ENCODE measurements at regions of chr6 and their contacts with region 1.

Region 1: DNA sequence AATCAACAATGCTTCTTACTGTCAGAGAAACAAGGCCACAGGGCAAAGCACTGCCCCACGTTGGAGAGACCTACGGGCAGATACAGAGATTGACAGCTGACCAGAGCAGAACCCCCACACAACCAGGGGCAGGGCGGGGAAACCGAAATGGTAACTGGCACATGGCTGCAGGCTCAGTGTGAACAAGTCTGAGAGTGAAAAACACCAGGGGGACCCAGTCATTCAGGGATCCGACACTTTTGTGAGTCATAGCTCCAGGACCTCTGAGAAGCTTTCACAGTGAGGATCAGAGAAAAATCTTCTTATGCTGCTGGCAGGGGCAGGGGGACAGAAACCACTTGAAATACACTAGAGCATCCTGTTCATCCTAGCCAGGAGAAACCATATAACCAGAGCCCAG is 254.2 kb downstream of the C6orf118 start:
- DNase-seq: no peak
- ATAC-seq: no peak
- H3K4me3 ChIP-seq: no peak overlapping the region
- H3K27ac ChIP-seq: no peak overlapping the region
- H3K4me1 ChIP-seq: no peaks in the 10 kb centered on the region
- H3K27me3 ChIP-seq: no peaks in the 10 kb centered on the region
- CTCF ChIP-seq: no peak
- EP300 ChIP-seq: no peak
- POLR2A ChIP-seq: no peak
- RAD21 ChIP-seq: no peak

Region 2: GRCh38 chr6:165034271-165034741 is 20.9 kb before region 1 on chr6:
- CTCF ChIA-PET with region 1: no interaction called
- POLR2A ChIA-PET with region 1: no interaction called
- in situ Hi-C with region 1: no loop called
- intact Hi-C with region 1: no loop called
- DNase-seq: no peak
- ATAC-seq: no peak
- H3K4me3 ChIP-seq: no peak overlapping the region
- H3K27ac ChIP-seq: no peak overlapping the region
- H3K4me1 ChIP-seq: no peaks in the 10 kb centered on the region
- H3K27me3 ChIP-seq: no peaks in the 10 kb centered on the region
- CTCF ChIP-seq: no peak
- EP300 ChIP-seq: no peak
- POLR2A ChIP-seq: no peak
- RAD21 ChIP-seq: no peak

Region 3: GRCh38 chr6:165077876-165078275 is 22.6 kb after region 1 on chr6:
- CTCF ChIA-PET with region 1: no interaction called
- POLR2A ChIA-PET with region 1: no interaction called
- in situ Hi-C with region 1: no loop called
- intact Hi-C with region 1: loop called (anchors 1 kb)
- DNase-seq: no peak
- ATAC-seq: no peak
- H3K4me3 ChIP-seq: no peak overlapping the region
- H3K27ac ChIP-seq: no peak overlapping the region
- H3K4me1 ChIP-seq: no peaks in the 10 kb centered on the region
- H3K27me3 ChIP-seq: no peaks in the 10 kb centered on the region
- CTCF ChIP-seq: no peak
- EP300 ChIP-seq: no peak
- POLR2A ChIP-seq: no peak
- RAD21 ChIP-seq: no peak